Testis (tissue), 5 donors: ENCODE measurements at regions of chr3 and their contacts with region 1.

Region 1: DNA sequence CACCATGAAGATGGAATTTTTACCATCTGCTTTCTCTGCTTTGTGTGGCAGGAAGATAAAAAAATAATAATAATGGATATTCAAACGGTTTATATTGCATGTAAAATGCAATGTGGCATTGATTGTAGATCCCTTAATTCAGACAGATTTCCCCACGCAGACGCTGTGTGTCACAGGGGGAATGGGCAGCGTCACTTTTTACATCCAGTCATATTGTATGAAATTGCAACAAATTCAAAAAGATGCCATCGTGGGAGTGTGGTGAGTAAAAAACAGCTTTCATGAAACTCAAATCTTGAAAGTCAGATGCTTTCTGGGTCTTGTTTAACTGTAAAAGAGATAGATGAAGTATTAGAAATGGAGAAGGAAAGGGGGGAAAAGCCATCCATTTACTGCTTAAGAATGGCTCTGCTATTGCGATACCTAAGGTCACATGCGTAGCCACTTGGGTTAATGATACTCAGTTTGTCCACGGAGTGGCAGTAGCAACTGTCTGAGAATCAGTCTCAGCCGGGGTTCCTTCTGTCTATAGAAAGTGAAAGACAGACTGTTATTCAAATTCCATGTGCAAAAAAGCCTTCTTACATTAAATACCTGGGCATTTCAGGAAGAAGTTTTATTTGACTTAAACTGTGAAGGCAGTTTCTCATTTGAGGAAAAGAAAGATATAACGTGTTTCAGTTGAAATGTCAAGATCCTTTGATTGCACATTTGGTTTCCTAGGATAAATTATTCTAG is 28.5 kb downstream of the BTD start:
- DNase-seq: peak; percentile 78
- H3K4me3 ChIP-seq: no peak overlapping the region
- H3K27ac ChIP-seq: peak overlapping the region in 1 of 2 donors; percentile 82
- H3K4me1 ChIP-seq: peaks cover 41% of the 10 kb centered on the region
- H3K27me3 ChIP-seq: no peaks in the 10 kb centered on the region
- CTCF ChIP-seq: peak; percentile 63 to 81 (median 75)
- POLR2A ChIP-seq: no peak

Region 2: DNA sequence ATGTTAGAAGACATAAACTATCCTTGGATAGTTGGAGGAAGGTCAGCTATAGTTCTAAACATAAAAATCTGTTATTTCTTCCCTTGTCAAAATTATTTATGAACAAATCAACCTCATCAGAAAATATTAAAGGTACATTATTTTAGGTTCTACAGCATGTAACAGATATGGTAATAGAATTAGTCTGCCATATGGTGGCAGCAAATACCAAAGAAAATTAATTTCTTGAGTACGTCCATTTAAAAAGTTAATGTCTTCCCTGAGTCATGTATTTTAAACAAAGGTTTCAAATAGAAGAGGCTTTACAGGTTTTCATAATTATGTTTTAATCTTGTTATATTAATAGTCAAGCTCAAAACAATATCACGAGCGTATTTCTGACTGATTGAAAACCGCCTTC is 185.7 kb after region 1 on chr3:
- intact Hi-C with region 1: loop called (anchors 10 kb)
- DNase-seq: no peak
- H3K4me3 ChIP-seq: no peak overlapping the region
- H3K27ac ChIP-seq: no peak overlapping the region
- H3K4me1 ChIP-seq: no peaks in the 10 kb centered on the region
- H3K27me3 ChIP-seq: no peaks in the 10 kb centered on the region
- CTCF ChIP-seq: peak; percentile 14 to 33 (median 21)
- POLR2A ChIP-seq: no peak

Region 3: GRCh38 chr3:15845475-15845874 is 215.4 kb after region 1 on chr3:
- intact Hi-C with region 1: no loop called
- DNase-seq: no peak
- H3K4me3 ChIP-seq: no peak overlapping the region
- H3K27ac ChIP-seq: no peak overlapping the region
- H3K4me1 ChIP-seq: no peaks in the 10 kb centered on the region
- H3K27me3 ChIP-seq: no peaks in the 10 kb centered on the region
- CTCF ChIP-seq: no peak
- POLR2A ChIP-seq: no peak